AG04450 (cell line): ENCODE measurements at regions of chr6 and their contacts with region 1.

Region 1: DNA sequence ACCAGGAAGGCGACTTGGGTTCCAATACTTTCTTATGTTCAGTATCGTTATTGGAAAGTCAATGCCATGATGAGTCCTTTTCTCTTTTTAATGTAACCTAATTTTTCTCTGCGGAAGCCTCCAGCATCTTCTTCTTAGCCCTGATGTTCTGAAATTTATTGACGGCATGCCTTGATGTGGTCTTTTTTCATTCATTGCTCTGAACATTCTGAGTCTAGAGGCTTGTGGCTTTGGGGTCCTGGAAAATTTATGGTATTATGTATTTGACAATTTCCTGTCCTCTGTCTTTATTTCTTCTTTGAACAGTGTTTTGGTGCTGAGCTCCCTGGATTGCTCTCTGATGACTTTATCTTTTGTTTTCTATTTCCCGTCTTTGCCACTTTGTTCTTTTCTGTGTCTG is 28.7 kb upstream of the MAS1 start:
- DNase-seq: no peak
- H3K4me3 ChIP-seq: no peak overlapping the region
- H3K27ac ChIP-seq: no peak overlapping the region
- H3K27me3 ChIP-seq: no peaks in the 10 kb centered on the region
- CTCF ChIP-seq: no peak

Region 2: DNA sequence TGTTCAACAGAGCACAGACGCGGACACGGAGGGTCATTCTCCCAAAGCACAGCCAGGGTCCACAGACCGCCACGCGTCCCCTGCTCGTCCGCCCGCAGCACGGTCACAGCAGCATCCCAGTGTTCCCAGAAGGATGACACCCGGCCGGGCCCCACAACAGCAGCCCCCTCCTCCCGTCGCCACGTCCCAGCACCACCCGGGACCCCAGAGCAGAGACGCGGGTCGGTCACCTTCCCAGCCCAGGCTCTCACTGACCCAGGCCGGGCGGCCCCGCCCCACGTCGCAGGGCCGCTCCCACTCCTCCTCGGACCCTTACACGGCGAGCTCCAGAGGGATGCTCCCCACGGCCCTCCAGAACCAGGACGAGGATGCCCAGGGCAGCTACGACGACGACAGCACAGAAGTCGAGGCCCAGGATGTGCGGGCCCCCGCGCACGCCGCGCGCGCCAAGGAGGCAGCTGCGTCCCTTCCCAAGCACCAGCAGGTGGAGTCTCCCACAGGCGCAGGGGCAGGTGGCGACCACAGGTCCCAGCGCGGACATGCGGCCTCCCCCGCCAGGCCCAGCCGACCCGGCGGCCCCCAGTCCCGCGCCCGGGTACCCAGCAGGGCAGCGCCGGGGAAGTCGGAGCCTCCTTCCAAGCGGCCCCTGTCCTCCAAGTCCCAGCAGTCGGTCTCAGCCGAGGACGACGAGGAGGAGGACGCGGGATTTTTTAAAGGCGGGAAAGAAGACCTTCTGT is 628.6 kb before region 1 on chr6:
- CTCF ChIA-PET with region 1: no interaction called
- POLR2A ChIA-PET with region 1: no interaction called
- DNase-seq: no peak
- H3K4me3 ChIP-seq: no peak overlapping the region
- H3K27ac ChIP-seq: no peak overlapping the region
- H3K27me3 ChIP-seq: peaks cover 4% of the 10 kb centered on the region
- CTCF ChIP-seq: no peak

Region 3: DNA sequence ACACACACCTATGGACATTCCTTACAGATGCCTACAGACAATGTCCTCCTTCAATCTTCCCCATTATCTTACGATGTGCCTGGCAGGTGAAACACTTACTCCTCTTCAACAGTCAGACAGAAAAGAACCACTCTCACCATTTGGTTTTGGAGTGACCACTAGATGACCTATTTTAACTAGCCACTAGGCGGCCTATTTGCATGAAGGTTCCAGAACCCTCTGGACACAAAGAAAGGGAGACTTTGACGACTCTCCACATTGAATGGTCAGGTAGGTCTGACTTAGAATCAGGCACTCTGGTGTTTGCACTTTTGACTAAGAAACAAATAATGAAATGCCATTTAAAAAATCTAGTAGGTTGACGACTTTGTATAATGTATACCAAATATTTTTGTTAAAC is 20.1 kb before region 1 on chr6:
- CTCF ChIA-PET with region 1: no interaction called
- POLR2A ChIA-PET with region 1: no interaction called
- DNase-seq: no peak
- H3K4me3 ChIP-seq: no peak overlapping the region
- H3K27ac ChIP-seq: no peak overlapping the region
- H3K27me3 ChIP-seq: no peaks in the 10 kb centered on the region
- CTCF ChIP-seq: peak; percentile 43

Region 4: DNA sequence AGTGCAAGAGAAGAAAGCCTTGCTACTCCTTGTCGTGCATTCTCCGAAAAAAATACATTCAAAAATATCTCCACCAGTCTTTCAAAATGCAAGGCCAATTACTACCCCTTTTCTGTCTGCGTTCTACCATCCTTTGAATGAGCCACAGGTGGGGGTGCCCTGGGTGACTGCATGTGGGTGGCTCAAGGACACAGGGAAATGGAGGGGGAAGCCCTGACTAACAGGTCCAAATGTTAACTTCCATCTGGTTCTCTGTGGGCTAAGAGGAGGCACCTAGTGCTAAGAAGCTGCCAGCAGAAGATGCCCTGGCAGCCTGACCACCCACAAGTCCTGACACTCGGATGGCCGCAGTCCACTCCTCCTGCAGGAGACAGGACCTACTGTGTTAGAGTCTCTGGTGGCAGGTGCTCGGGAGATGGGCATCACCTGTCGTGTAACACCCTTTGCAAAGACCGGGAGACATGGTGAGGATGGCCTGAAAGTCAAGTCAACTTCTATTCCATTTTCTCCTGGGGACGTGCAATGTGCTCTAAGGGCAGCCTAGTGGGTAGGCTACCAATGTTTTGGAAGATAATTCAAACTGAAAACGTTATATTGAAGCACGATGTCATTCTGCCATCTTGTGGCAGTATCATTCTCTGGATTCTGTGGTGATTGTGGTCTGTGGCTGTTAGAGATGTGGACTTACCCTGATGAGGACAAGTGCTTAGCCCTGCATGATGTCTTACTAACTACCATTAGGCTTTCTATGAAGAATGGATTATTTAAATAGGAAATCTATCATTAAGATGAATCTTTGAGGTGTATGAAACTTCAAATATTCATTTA is 79.4 kb after region 1 on chr6:
- CTCF ChIA-PET with region 1: interaction called, 119 read pairs
- POLR2A ChIA-PET with region 1: no interaction called
- DNase-seq: no peak
- H3K4me3 ChIP-seq: no peak overlapping the region
- H3K27ac ChIP-seq: no peak overlapping the region
- H3K27me3 ChIP-seq: peaks cover 7% of the 10 kb centered on the region
- CTCF ChIP-seq: peak; percentile 61

Region 5: GRCh38 chr6:160077526-160077925 is 215.4 kb after region 1 on chr6:
- CTCF ChIA-PET with region 1: interaction called, 12 read pairs
- POLR2A ChIA-PET with region 1: no interaction called
- DNase-seq: peak; percentile 29
- H3K4me3 ChIP-seq: no peak overlapping the region
- H3K27ac ChIP-seq: peak overlapping the region; percentile 47
- H3K27me3 ChIP-seq: no peaks in the 10 kb centered on the region
- CTCF ChIP-seq: no peak